Activated CD4-positive, alpha-beta memory T cell treated with anti-CD3 and anti-CD28 coated beads, Interleukin-2, amount 10 ng/mL, durations not matched to agents 7 days and 5 days (primary cell): ENCODE measurements at regions of chr10 and their contacts with region 1.

Region 1: DNA sequence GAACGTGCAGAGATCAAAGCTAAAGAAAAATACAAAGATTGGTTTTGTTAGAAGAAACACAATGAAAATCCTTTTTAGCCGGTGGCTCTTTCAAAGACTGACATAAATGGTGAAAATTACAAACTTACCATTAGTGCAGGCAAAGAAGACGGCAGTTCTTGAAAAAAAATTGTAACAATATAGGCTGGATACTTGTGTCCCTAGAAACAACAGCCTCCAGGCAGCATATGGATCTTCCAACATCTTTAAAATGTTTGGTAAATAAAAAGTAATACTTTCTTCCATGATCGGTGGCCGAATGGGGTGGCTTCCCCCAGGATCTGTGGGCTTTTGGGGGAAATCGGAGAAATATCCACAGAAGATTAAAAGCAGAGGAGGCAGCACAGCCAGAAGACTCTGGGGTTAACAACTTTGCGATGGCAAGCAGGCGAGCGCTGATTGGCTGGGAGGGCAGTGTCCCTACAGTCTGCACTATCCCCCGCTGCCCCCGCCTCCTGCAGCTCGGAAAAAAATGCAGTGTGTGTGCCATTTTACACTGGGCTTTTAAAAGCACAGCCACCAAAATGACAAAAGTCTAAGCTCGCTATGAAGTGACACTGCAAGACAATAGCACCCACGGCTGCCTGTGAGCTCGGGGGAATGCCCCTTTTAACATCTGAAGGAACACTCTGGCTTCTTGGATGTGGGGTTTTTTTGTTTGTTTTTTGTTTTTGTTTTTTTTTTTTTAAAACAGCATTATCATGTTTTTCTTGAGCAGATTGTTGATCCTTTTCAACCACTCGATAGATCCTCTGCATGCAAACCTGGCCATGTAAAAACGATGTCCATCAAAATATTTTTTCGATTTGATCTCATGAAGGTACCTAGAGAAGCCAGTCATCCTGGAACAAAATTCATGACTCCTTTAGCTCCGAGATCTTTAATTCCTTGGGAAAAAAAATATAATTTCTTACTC is 31.7 kb upstream of the EPC1 start:
- DNase-seq: peak; percentile 95
- H3K4me3 Mint-ChIP-seq: no peak overlapping the region
- H3K27ac Mint-ChIP-seq: no peak overlapping the region
- H3K4me1 Mint-ChIP-seq: peaks cover 25% of the 10 kb centered on the region
- H3K27me3 Mint-ChIP-seq: no peaks in the 10 kb centered on the region

Region 2: DNA sequence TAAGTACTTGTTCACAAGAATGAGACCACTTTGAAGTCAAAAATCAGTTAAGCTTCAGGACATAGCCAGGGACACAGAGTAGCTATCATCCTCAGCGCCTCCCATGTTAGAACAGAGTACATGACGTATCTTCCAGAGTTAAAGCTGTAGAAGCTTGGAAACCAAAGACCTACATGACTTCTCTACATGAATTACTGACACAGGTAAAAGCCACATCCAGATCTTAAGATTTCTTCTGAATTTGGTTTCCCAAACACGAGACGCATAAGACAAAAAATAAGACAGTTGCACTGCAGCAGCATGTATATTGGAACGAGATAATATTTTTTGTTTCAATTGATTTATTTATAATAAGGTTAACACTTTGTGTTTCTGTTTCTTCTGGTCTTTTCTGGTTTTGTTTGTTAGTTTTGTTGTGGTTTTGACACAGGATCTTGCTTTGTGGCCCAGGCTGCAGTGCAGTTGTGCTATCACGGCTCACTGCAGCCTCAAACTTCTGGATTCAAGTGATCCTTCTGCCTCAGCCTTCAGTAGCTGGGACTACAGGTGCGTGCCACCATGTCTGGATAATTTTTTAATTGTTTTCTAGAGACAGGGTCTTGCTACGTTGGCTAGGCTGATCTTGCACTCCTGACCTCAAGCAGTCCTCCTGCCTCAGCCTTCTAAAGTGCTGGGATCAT is 21.4 kb before region 1 on chr10:
- CTCF ChIA-PET with region 1: interaction called, 5 read pairs
- POLR2A ChIA-PET with region 1: interaction called, 28 read pairs
- DNase-seq: peak; percentile 61
- H3K4me3 Mint-ChIP-seq: peak overlapping the region; percentile 62
- H3K27ac Mint-ChIP-seq: peak overlapping the region; percentile 92
- H3K4me1 Mint-ChIP-seq: peaks cover 79% of the 10 kb centered on the region
- H3K27me3 Mint-ChIP-seq: no peaks in the 10 kb centered on the region

Region 3: GRCh38 chr10:32367793-32368453 is 10.7 kb before region 1 on chr10:
- CTCF ChIA-PET with region 1: interaction called, 19 read pairs
- POLR2A ChIA-PET with region 1: interaction called, 25 read pairs
- DNase-seq: peak; percentile 77
- H3K4me3 Mint-ChIP-seq: no peak overlapping the region
- H3K27ac Mint-ChIP-seq: peak overlapping the region; percentile 4
- H3K4me1 Mint-ChIP-seq: peaks cover 40% of the 10 kb centered on the region
- H3K27me3 Mint-ChIP-seq: no peaks in the 10 kb centered on the region

Region 4: GRCh38 chr10:32445740-32446535 is 67.3 kb after region 1 on chr10 and contains the start of gene CCDC7:
- CTCF ChIA-PET with region 1: interaction called, 17 read pairs
- POLR2A ChIA-PET with region 1: interaction called, 81 read pairs
- DNase-seq: peak; percentile 89
- H3K4me3 Mint-ChIP-seq: peak within 1 kb of the TSS; percentile 87
- H3K27ac Mint-ChIP-seq: peak within 1 kb of the TSS; percentile 95
- H3K4me1 Mint-ChIP-seq: peaks cover 19% of the 10 kb centered on the region
- H3K27me3 Mint-ChIP-seq: peaks cover 4% of the 10 kb centered on the region
- total RNA-seq, gene CCDC7: 12.7 to 15.2 TPM

Region 5: GRCh38 chr10:32958085-32959005 is 579.7 kb after region 1 on chr10 and contains the start of gene ITGB1:
- CTCF ChIA-PET with region 1: no interaction called
- POLR2A ChIA-PET with region 1: interaction called, 12 read pairs
- DNase-seq: peak; percentile 88
- H3K4me3 Mint-ChIP-seq: peak within 1 kb of the TSS; percentile 82
- H3K27ac Mint-ChIP-seq: peak within 1 kb of the TSS; percentile 82
- H3K4me1 Mint-ChIP-seq: peaks cover 46% of the 10 kb centered on the region
- H3K27me3 Mint-ChIP-seq: no peaks in the 10 kb centered on the region
- total RNA-seq, gene ITGB1: 233 to 242 TPM

Region 6: DNA sequence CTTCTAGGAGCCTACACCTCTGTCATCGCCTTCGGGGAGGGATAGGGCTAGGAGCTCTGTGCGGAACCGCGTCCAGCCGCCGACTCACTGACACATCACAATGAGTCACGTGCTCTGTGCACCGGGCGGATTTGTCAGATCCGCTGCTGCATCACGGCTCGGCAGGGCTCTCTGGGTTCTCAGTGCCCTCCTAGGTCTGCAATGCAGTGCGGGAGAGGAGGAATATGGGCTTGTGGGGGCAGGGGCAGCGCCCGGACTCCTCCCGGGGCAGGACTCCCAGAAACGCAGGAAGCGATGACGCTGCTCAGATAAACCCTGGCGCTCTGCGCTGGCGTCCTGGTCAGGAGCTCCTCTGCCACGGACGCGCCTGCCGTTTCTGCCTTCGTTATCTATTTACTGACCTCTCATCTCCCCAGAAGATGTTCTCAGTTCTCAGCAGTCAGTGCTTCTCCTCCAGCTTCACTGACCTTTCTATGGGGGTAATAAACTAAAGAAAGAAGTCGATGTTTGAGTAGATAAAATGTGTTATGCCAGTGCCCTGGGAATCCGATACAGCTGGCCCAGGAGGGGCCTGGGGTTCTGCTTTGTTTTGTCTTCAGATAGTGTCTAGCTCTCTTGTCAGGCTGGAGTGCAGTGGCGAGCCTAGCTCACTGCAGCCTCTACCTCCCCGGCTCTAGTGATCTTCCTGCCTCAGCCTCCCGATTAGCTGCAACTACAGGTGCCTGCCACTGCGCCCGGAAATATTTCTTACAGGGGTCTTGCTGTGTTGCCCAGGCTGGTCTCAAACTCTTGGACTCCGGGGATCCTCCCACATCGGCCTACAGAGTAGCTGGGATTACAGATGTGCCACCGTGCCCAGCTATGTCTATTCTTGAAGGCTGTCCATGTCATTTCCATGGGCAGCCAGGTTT is 602.2 kb after region 1 on chr10:
- CTCF ChIA-PET with region 1: interaction called, 5 read pairs
- POLR2A ChIA-PET with region 1: interaction called, 19 read pairs
- DNase-seq: peak; percentile 89
- H3K4me3 Mint-ChIP-seq: peak overlapping the region; percentile 88
- H3K27ac Mint-ChIP-seq: peak overlapping the region; percentile 93
- H3K4me1 Mint-ChIP-seq: peaks cover 42% of the 10 kb centered on the region
- H3K27me3 Mint-ChIP-seq: no peaks in the 10 kb centered on the region